ENCODE measurements at regions of chr20 and their contacts with region 1.

Region 1: DNA sequence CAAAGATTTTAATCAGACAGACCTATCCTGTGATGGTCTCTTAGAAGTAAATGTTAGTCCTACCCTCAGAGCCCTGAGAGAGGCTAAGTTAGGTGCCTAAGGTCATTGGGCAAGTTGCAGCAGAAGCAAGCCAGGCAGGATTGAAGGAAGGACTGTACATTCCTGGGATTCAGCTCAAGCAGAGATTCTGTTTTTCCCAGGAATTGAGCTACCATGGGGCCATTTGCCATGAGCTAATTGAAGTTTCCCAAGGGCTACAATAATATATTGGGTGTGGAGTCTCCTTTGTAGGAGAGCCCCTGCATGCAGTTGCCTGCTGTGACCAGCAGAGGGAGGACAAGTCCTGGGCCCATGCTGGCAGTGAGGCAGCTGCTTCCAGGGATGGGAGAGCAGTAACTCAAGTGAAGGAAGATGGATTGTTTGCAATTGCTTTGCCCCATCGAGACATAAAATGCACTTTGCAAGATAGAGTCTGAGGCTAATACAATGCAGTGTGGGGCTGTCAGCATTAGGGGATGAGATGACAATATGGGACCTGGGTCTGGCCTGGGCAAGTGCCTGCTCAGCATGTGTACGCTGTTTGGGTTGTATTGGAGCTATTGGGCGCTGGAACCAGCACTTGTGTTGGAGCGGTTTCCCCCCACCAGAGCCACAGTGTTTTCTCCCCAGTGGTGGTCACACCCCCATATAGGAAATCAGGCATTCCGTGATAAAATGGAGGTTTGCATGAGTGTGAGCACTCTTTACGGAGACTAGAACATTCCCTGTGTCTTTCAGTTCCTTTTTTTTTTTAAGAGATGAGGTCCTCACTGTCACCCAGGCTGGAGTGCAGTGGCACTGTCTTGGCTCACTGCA is 27.9 kb downstream of the DNMT3B start:
- DNase-seq: peak; percentile 86
- H3K4me3 Mint-ChIP-seq: no peak overlapping the region
- H3K27ac Mint-ChIP-seq: no peak overlapping the region
- H3K4me1 Mint-ChIP-seq: peaks cover 28% of the 10 kb centered on the region
- H3K27me3 Mint-ChIP-seq: no peaks in the 10 kb centered on the region

Region 2: GRCh38 chr20:32830437-32830836 is 40.3 kb after region 1 on chr20:
- CTCF ChIA-PET with region 1: interaction called, 6 read pairs
- intact Hi-C with region 1: loop called (anchors 5 kb)
- DNase-seq: no peak
- H3K4me3 Mint-ChIP-seq: no peak overlapping the region
- H3K27ac Mint-ChIP-seq: peak overlapping the region; percentile 17
- H3K4me1 Mint-ChIP-seq: peaks cover 61% of the 10 kb centered on the region
- H3K27me3 Mint-ChIP-seq: no peaks in the 10 kb centered on the region

Region 3: DNA sequence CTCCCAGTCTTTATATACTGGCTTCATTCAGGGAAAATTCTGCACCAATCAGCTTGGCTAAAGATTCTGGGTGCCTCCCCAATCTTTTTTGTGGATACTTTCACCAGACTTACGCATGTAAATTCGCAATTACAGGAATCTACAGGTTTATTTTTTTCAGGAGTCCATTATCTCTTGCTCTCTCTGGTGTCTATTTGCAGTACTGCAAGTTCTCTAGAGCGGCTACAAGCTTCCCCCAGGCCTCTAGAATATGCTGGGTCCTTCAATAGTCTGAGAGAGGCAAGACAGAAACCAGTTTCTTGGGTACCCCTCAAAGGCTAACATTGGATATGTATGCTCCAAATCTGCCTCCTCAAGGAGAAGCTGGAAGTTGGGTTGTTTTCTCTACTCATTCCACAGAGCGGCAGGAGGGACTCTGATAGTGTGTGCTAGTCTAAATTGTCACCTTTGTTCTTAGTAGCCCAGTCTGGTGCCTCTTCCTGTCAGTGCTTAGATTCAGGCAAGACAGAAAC is 155.6 kb after region 1 on chr20:
- CTCF ChIA-PET with region 1: interaction called, 8 read pairs
- intact Hi-C with region 1: loop called (anchors 1 kb)
- DNase-seq: peak; percentile 58
- H3K4me3 Mint-ChIP-seq: peak overlapping the region; percentile 23
- H3K27ac Mint-ChIP-seq: peak overlapping the region; percentile 92
- H3K4me1 Mint-ChIP-seq: peaks cover 37% of the 10 kb centered on the region
- H3K27me3 Mint-ChIP-seq: no peaks in the 10 kb centered on the region

Region 4: DNA sequence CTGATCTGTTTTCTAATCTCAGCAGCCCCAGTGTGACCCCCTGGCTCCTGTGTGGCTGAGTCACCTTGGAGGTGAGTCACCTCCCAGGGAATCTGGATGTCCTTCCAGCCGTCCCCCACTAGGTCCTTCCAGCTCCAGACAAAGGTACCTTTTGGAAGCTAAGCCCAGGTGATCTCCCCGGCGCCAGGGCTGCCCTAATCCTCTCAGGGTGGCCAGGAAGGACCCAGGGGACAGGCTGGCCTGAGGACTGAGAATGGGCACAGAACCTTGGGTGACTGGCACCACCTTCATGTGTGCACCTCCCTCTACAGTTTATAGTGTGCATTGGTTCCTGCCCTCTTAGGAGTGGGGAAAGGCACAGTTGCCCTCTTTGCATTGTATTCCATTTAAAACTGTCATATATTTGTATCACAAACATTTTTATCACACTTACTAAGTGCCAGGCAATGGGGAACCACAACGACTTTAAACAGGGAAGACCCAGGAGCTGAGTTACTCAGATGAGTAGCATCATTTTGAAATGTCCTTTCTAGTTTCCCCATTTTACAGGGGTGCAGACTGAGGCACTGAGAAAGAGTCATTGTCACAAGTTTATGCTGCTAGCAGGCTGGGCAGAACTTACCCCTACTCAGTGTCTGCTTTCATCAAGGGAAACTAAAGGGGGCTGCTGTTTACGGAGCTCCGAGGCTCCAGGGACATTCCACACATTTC is 286.7 kb after region 1 on chr20:
- CTCF ChIA-PET with region 1: no interaction called
- intact Hi-C with region 1: loop called (anchors 5 kb)
- DNase-seq: peak; percentile 29
- H3K4me3 Mint-ChIP-seq: no peak overlapping the region
- H3K27ac Mint-ChIP-seq: no peak overlapping the region
- H3K4me1 Mint-ChIP-seq: no peaks in the 10 kb centered on the region
- H3K27me3 Mint-ChIP-seq: no peaks in the 10 kb centered on the region

Region 5: DNA sequence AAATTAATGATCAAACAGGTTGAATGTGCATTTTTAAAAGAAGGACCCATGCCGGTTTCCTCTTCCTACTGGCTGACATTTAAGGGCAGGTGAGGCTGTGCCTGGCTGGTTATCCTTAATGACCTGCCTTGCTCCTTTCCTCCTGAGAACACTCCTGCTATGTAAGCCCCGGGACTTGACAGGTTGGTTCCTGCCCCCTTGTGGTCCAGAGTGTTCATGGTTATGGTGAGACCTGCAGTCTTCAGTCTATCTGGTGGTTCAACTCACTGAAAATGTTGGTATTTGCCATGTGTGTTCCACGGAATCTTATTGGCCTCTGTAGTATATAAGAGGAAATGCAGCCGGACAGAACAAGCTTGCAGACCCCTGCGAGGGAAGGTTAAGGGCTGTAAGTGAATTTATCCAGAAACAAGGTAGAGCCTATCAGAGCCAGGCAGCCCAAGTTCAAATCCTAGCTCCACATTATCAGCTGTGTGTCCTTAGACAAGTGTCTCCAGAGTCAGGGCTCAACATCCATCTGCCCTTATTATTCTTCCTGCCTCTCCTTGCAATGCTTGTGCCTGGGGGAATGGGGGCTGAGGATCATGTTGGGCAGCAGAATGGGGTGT is 421.8 kb after region 1 on chr20:
- CTCF ChIA-PET with region 1: interaction called, 3 read pairs
- intact Hi-C with region 1: loop called (anchors 2 kb)
- DNase-seq: peak; percentile 59
- H3K4me3 Mint-ChIP-seq: no peak overlapping the region
- H3K27ac Mint-ChIP-seq: no peak overlapping the region
- H3K4me1 Mint-ChIP-seq: no peaks in the 10 kb centered on the region
- H3K27me3 Mint-ChIP-seq: peaks cover 27% of the 10 kb centered on the region